PC-9 (cell line): ENCODE measurements at regions of chr4 and their contacts with region 1.

Region 1: DNA sequence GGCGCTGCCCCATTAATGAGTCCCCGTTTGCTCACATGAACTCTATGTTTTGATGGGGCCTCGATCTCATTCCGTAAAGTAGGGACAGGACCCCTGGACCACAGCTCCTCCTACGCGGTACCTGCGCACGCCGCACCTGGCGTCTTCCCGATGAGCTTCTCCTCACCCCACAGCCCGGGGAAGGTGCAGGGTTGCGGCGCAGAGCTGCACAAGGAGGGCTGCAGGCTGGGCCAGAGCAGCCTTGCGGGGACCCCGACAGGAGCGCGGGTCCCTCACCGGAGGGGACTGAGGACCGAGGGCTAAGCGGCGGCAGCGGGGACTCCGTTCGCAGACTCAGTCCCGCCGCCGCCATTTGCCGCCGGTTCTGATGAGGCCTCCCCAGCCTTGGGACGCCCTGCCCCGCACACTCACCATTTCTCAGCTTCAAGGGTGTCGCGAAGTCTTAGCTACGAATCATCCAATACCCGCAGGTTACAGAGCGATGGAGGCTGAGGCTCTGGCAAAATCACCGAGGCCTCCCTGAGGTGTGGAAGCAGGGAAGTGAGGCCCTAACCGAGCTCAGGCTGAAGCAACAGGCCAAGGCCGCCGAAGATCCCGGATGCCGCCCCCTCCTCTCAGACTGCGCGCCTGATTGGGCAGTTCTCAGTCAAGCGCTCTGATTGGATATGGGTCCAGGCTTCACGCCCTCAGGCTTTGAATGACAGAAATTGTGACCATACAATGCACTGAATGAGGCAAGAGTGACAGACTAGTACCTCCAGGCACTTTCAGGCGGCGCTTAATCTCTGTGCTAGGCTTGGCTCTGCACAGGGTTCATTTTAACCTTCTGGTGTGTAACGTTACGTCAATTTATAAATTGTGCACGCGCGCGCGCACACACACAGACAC is 25.1 kb downstream of the ZNF721 start:
- DNase-seq: peak; percentile 95 to 98
- H3K4me3 ChIP-seq: peak overlapping the region; percentile 90
- H3K27ac ChIP-seq: peak overlapping the region; percentile 69
- H3K4me1 ChIP-seq: peaks cover 9% of the 10 kb centered on the region; the same call in 1 of the 2 replicates
- H3K27me3 ChIP-seq: no peaks in the 10 kb centered on the region
- CTCF ChIP-seq: no peak

Region 2: DNA sequence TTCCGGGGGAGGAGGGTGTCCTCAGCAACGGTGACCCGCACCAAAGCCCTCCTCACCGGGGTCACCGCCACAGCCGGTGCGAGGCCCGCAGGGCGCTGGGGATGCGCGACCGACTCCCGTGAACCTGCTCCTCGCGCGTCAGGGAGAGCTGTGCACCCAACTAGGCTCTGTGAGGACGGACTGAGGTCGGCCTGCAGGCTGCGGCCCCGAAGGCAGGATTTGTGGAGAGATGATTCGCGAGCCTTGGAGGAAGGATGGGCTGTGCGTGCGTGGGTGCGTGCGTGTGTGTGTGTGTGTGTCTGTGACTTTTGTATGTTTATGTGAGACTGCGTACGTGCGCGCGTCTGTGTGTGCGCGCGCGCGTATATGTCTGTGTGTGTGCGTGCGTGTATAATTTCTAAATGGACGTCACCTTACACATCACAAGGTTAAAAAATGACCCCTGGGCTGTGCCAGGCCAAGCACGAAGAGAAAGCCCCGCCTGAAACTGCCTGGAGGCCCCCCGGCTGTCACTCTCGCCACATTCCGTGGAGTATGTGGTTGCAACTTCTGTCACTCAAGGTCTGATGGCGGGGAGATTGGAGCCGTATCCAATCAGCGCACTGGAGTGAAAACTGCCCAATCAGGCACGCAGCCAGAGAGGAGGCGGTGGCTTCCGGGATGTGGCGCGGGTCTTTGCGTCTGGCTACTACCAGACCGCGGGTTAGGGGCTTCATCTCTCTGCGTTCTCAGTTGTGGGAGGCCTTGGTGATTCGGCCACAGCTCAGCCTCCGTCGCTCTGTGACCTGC is 136.5 kb before region 1 on chr4 and contains the start of gene ZNF141:
- CTCF ChIA-PET with region 1: no interaction called
- POLR2A ChIA-PET with region 1: no interaction called
- intact Hi-C with region 1: loop called (anchors 10 kb)
- DNase-seq: peak; percentile 80 to 87
- H3K4me3 ChIP-seq: peak within 1 kb of the TSS; percentile 59
- H3K27ac ChIP-seq: no peak within 1 kb of the TSS
- H3K4me1 ChIP-seq: no peaks in the 10 kb centered on the region
- H3K27me3 ChIP-seq: no peaks in the 10 kb centered on the region
- CTCF ChIP-seq: no peak
- total RNA-seq, gene ZNF141: 12.7 and 12.9 TPM in 2 replicates

Region 3: DNA sequence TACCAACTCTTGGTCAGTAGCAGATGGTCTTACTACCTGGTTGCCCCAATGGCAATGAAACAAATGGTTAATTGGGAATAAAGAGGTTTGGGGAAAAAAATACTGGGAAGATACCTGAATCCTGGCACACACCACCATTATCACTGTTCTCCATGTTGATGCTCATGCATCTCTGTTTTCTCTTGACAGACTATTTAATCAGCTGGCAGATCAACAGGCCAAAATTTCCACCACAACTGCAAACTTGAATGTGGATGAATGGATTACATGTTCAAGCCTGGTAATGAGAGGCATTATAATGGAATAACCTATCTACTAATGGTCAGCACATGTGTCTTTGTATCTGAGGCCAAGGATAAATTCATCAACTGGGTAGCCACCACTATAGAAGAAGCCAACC is 20.5 kb before region 1 on chr4:
- CTCF ChIA-PET with region 1: no interaction called
- POLR2A ChIA-PET with region 1: no interaction called
- intact Hi-C with region 1: loop called (anchors 1 kb)
- DNase-seq: no peak
- H3K4me3 ChIP-seq: 0 out of 2 replicates have a peak overlapping the region, but pooled peaks have one; percentile 3
- H3K27ac ChIP-seq: no peak overlapping the region
- H3K4me1 ChIP-seq: no peaks in the 10 kb centered on the region
- H3K27me3 ChIP-seq: no peaks in the 10 kb centered on the region
- CTCF ChIP-seq: no peak

Region 4: DNA sequence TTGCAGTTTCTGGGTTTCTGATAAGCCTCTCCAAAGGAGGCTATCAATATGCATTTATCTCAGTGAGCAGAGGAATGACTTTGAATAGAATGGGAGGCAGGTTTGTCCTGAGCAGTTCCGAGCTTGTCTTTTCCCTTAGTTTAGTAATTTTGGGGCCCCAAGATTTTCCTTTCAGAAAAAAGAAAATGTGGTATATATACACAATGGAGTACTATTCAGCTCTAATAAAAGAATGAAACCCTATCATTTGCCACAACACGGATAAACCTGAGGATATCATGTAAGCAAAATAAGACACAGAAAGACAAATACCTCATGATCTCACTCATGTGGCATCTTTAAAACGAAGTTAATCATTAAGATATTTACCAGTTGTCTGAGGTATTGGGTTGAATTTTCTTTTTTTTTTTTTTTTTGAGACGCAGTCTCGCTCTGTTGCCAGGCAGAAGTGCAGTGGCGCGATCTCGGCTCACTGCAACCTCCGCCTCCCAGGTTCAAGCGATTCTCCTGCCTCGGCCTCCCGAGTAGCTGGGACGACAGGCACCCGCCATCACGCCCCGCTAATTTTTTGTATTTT is 24.6 kb after region 1 on chr4:
- CTCF ChIA-PET with region 1: no interaction called
- POLR2A ChIA-PET with region 1: no interaction called
- intact Hi-C with region 1: loop called (anchors 1 kb)
- DNase-seq: no peak
- H3K4me3 ChIP-seq: peak overlapping the region; percentile 97
- H3K27ac ChIP-seq: peak overlapping the region; percentile 60
- H3K4me1 ChIP-seq: peaks cover 11% of the 10 kb centered on the region
- H3K27me3 ChIP-seq: no peaks in the 10 kb centered on the region
- CTCF ChIP-seq: no peak

Region 5: GRCh38 chr4:575281-576141 is 101.7 kb after region 1 on chr4:
- CTCF ChIA-PET with region 1: no interaction called
- POLR2A ChIA-PET with region 1: no interaction called
- intact Hi-C with region 1: no loop called
- DNase-seq: no peak
- H3K4me3 ChIP-seq: no peak overlapping the region
- H3K27ac ChIP-seq: no peak overlapping the region
- H3K4me1 ChIP-seq: no peaks in the 10 kb centered on the region
- H3K27me3 ChIP-seq: peaks cover 67% of the 10 kb centered on the region
- CTCF ChIP-seq: no peak

Region 6: GRCh38 chr4:742742-743311 is 269.0 kb after region 1 on chr4:
- CTCF ChIA-PET with region 1: no interaction called
- POLR2A ChIA-PET with region 1: no interaction called
- intact Hi-C with region 1: no loop called
- DNase-seq: peak in 1 of 2 experiments; percentile 66
- H3K4me3 ChIP-seq: no peak overlapping the region
- H3K27ac ChIP-seq: no peak overlapping the region
- H3K4me1 ChIP-seq: no peaks in the 10 kb centered on the region
- H3K27me3 ChIP-seq: no peaks in the 10 kb centered on the region
- CTCF ChIP-seq: peak; percentile 96

Region 7: DNA sequence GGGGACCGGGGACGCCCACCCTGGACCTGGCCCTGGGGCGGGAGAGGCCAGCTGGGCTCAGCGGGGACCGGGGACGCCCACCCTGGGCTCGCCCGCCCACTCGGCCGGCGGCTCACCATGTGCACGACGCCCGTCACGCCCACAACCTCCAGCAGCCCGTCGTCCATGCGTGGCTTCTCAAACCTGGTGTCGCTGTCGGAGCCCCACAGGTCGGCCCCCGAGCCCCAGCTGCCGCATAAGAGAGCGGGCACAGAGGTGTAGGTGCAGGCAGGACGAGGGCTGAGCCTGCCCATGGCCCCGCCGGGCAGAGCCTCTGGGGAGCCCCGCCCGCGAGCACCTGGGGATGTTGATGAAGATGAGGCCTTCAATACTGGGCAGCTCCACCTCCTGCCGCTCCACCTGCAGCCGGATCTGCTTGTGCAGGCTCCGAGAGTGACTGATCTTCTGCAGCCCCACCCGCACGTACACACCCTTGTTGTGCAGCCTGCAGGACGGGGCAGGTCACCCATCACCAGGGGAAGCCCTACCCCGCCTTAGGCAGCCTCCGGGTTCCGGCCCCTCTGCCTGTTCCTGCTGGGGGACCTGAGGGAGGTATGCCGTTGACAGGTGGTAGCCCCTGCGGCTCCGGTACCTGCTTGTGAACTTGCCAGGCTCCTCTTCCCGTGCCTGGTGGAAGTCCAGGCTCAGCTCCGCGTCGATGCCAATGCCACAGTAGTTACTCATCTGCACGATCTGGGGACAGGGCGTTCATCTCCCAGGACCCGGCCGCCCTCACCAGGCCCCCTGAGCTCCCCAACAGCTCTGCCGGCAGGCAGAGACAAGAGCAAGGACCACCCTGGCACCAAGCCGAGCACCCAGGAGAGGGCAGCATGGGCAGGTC is 487.8 kb after region 1 on chr4:
- CTCF ChIA-PET with region 1: no interaction called
- POLR2A ChIA-PET with region 1: no interaction called
- intact Hi-C with region 1: no loop called
- DNase-seq: no peak
- H3K4me3 ChIP-seq: no peak overlapping the region
- H3K27ac ChIP-seq: no peak overlapping the region
- H3K4me1 ChIP-seq: no peaks in the 10 kb centered on the region
- H3K27me3 ChIP-seq: no peaks in the 10 kb centered on the region
- CTCF ChIP-seq: no peak

Region 8: GRCh38 chr4:1463088-1463926 is 989.5 kb after region 1 on chr4:
- CTCF ChIA-PET with region 1: no interaction called
- POLR2A ChIA-PET with region 1: no interaction called
- intact Hi-C with region 1: no loop called
- DNase-seq: no peak
- H3K4me3 ChIP-seq: no peak overlapping the region
- H3K27ac ChIP-seq: no peak overlapping the region
- H3K4me1 ChIP-seq: no peaks in the 10 kb centered on the region
- H3K27me3 ChIP-seq: peaks cover 92% of the 10 kb centered on the region
- CTCF ChIP-seq: no peak